ENCODE measurements at regions of chr17 and their contacts with region 1.

Region 1: GRCh38 chr17:68346448-68346847 is 55.2 kb downstream of the ARSG start:
- DNase-seq: peak; percentile 89
- H3K4me3 Mint-ChIP-seq: peak overlapping the region; percentile 74
- H3K27ac Mint-ChIP-seq: peak overlapping the region; percentile 93
- H3K4me1 Mint-ChIP-seq: peaks cover 67% of the 10 kb centered on the region
- H3K27me3 Mint-ChIP-seq: no peaks in the 10 kb centered on the region

Region 2: DNA sequence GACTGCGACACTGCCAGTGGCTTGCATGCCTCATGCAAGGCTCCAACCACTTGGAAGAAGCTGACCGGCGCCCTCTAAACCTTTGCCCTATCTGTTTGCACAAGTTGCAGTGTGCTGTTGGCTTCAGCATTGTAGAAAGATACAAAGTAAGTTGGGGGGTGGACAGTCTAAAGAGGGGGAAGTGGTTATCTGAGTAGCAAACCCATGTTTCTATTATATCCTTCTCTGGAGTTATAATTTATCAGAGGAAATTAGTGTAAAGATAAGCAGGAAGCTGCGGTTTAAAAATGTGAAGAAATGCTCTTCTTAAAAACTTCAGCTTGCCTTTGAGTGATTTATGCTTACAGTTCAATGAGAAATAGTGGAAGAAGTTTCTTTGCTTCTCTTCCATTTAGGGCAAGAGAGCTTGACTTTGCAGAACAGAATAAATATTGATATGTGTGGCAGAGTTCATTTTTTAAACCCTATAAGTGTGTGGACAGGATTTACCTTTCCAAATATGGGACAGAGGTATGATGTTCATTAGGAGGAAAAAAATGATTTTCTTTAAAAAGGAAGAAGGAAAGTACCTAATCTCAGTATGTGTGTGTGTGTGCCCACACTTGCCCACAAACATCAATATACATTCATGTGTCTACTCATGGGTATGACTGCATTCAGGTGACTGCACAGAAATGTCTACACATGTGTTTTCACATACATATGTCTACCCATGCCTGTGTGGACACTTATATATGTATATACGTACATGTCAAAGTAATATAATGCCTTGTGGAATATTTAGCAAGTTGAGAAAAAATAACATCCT is 90.5 kb before region 1 on chr17:
- CTCF ChIA-PET with region 1: no interaction called
- POLR2A ChIA-PET with region 1: no interaction called
- intact Hi-C with region 1: loop called (anchors 5 kb)
- DNase-seq: peak; percentile 50
- H3K4me3 Mint-ChIP-seq: peak overlapping the region; percentile 5
- H3K27ac Mint-ChIP-seq: peak overlapping the region; percentile 84
- H3K4me1 Mint-ChIP-seq: peaks cover 84% of the 10 kb centered on the region
- H3K27me3 Mint-ChIP-seq: no peaks in the 10 kb centered on the region

Region 3: GRCh38 chr17:68314916-68315535 is 31.4 kb before region 1 on chr17:
- CTCF ChIA-PET with region 1: no interaction called
- POLR2A ChIA-PET with region 1: no interaction called
- intact Hi-C with region 1: loop called (anchors 5 kb)
- DNase-seq: no peak
- H3K4me3 Mint-ChIP-seq: no peak overlapping the region
- H3K27ac Mint-ChIP-seq: no peak overlapping the region
- H3K4me1 Mint-ChIP-seq: peaks cover 51% of the 10 kb centered on the region
- H3K27me3 Mint-ChIP-seq: no peaks in the 10 kb centered on the region

Region 4: DNA sequence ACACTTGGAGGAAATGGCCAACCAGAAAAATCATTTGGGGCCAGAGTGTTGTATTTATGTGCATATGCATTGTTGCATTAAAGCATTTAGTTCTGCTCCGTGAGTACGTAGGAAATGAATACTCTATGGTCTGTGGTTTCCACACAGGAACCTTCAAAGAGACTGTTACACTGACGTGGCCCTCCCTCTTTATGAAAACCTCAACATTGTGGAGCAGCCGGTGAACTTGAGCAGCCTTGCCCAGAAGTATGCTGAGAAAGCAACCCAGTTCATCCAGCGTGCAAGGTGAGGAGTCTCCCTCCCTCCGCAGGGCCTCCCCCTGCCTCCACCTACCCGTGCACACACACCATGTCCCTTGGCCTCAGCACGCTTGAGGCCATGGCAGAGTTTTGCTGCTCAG is 10.1 kb after region 1 on chr17:
- CTCF ChIA-PET with region 1: no interaction called
- POLR2A ChIA-PET with region 1: interaction called, 8 read pairs
- intact Hi-C with region 1: loop called (anchors 1 kb)
- DNase-seq: peak; percentile 84
- H3K4me3 Mint-ChIP-seq: peak overlapping the region; percentile 40
- H3K27ac Mint-ChIP-seq: peak overlapping the region; percentile 68
- H3K4me1 Mint-ChIP-seq: peaks cover 54% of the 10 kb centered on the region
- H3K27me3 Mint-ChIP-seq: no peaks in the 10 kb centered on the region